GM18951 (cell line): ENCODE measurements at regions of chr6 and their contacts with region 1.

Region 1: GRCh38 chr6:26607434-26608230 is 10.9 kb downstream of the ABT1 start:
- POLR2A ChIP-seq: no peak

Region 2: DNA sequence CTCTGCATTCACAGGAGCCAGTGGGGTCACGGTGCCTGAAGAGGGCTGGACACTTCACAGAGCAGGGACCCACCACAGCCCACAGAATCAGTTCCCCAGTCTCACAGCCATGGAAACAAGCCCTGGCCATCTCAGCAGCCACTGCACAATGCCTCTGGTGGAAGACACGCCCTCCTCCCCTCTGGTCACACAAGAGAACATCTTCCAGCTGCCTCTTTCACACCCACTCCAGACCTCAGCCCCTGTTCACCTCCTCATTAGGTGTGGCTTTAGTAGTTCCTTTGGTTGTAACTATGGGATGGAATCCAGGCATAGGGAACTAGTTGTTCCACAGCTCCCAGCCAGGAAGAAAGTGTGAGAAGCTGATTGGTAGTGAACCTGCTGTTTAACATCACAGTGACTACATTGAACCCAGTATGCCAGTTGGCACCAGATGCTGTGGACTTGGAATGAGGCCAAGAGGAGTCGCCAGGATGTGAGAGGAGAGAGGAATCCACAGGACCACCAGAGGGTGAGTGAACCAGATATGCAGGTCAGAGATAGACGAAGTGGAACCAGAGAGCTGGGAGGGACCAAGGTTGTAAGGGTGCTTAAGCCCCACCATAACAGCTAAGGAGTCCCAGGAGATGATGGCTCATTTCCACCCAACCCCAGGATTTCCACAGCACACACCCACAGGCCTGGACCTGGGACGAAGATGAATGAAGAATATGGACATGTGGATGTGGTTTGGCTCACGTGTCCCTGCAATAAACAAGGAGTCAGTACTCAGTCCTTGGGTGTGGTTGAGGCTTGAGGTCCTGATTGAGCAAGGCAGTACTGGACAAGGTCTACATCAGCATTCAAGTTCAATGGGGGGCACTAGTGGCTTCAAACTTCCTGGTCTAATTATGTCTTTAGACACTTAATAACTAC is 176.1 kb before region 1 on chr6:
- in situ Hi-C with region 1: no loop called
- POLR2A ChIP-seq: no peak

Region 3: DNA sequence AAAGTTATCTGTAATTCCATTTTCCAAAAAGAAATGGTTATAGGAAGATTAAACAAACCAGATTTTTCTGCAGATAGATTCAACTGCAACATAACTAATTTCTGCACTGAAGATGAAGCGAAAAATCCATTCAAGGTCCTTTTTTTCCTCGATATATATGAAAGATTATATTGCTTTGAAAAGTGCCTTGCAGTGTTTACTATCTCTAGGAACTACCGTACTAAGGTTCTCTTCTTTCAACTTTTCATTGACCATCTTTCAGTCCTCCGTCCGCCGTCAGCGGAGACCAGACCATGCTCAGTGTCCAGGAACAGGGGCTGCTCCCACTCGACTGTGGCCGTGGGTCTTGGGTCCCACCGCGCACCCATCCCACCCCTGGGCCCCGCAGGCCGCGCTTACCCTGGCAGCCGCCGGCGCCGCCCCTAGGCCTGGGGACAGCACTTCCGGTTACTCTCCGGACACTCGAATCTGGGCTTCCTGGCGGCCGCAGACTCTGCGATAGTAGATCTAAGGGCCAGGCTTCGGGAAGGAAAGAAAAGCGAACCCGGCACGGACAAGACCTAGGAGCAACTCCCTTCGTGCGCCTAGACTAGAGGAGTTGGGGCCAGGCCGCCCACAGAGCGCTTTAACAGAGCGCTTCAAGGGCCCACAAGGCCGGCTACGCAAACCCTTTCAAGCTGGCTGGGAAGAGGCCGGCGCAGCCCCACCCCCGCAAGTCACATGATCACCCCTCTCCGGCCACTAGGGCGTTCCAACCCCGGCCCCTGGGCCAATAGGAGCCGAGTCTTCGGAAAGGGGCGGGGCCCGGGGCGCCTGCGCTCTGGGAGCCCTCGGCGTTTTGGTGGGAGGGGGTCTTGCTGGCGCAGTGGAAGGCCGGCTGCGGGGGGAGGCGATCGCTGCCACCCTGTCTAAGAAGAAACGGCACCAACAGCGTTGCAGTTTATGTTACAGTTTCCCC is 51.7 kb after region 1 on chr6 and contains the start of gene ZNF322:
- in situ Hi-C with region 1: loop called (anchors 5 kb)
- POLR2A ChIP-seq: peak; percentile 67